Ascending aorta (tissue), 2 donors: ENCODE measurements at regions of chr9 and their contacts with region 1.

Region 1: GRCh38 chr9:115649991-115650472 is 503.6 kb upstream of the PAPPA start:
- DNase-seq: peak; percentile 86 to 97
- H3K4me3 ChIP-seq: no peak overlapping the region
- H3K27ac ChIP-seq: peak overlapping the region; percentile 93 to 94
- H3K4me1 ChIP-seq: peaks cover 0 to 22% of the 10 kb centered on the region in 2 donors
- H3K27me3 ChIP-seq: no peaks in the 10 kb centered on the region
- CTCF ChIP-seq: no peak

Region 2: DNA sequence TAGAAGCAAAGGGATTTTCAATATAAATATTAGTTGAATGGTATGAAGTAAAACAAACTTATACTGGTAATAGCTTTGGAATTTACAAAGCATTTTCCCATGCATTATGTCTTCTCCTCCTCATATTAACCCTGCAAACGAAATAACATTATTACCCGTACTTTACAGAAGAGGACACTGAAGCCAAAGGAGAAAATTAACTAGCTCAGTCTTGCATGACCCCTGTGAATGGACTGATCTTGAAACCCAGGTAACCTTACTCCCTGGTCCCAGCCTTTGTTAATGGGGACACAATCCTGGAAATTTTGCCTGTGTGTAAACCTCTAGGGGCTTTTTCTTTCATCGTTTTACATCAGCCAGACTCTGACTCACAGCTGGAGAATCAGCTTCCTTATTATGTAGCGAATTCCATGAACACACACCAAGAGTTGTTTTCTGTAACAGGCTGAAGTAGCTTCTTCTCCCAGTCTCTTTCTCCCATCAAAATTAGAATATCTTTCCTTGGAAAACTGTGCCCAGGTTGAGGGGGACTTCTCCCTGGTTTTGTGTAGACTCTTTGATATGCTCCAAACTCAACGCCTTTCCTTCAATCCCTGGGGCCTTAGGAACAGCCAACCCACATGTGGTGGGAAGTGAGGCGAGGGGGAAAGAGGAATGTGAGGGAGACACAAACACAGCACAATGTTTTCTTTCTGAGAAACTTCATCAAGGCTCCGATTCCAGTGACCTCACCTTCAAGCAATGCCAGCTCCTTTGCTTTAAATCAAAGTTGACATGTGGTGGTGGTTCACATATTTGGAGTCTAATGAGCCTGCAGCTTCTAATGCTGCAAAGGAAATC is 22.7 kb after region 1 on chr9:
- intact Hi-C with region 1: loop called (anchors 1 kb)
- DNase-seq: peak in 1 of 2 donors; percentile 77
- H3K4me3 ChIP-seq: no peak overlapping the region
- H3K27ac ChIP-seq: peak overlapping the region; percentile 81 to 86
- H3K4me1 ChIP-seq: peaks cover 9 to 36% of the 10 kb centered on the region in 2 donors
- H3K27me3 ChIP-seq: no peaks in the 10 kb centered on the region
- CTCF ChIP-seq: no peak

Region 3: DNA sequence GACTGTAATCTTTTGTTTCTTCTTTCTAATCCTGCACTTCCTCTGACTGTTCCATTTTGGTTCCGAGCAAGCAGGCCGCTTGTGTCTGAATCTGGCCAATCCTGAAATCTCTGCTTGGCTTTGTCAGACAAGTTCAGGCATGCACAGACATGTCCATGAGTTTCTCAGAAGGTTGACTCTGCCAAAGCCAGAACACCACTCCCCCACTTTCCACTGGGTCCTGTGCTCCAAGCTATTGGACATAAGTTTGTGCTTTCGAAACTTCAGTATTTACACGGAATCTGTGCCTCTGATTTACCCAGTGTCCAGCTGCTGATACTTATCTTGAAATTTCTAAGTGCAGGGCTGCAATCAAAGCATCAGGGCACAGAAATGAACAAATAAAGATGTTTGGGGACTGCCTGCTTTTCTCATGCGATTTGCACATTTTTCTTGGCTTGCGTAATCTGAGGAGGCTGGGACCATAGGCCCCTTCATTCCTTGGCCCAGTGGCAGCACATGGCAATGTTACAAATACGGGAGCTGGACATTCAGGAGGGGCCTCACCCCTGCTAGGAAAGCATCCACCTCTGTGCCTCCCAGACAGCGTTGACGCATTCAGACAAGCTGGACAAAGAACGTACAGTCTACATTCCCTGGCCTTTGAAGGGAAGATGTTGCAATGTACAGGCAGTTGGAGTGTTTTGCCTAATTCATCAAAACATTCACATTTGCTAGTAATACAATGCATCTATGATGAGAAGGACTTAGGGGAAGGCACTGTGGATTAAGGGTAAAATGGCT is 294.3 kb after region 1 on chr9:
- intact Hi-C with region 1: loop called (anchors 1 kb)
- DNase-seq: peak in 1 of 2 donors; percentile 95
- H3K4me3 ChIP-seq: peak overlapping the region in 1 of 2 donors; percentile 10
- H3K27ac ChIP-seq: peak overlapping the region; percentile 83 to 90
- H3K4me1 ChIP-seq: peaks cover 0 to 18% of the 10 kb centered on the region in 2 donors
- H3K27me3 ChIP-seq: no peaks in the 10 kb centered on the region
- CTCF ChIP-seq: no peak

Region 4: GRCh38 chr9:116156621-116157314 is 506.7 kb after region 1 on chr9:
- intact Hi-C with region 1: loop called (anchors 5 kb)
- DNase-seq: peak; percentile 62 to 90
- H3K4me3 ChIP-seq: peak overlapping the region in 1 of 2 donors; percentile 86
- H3K27ac ChIP-seq: peak overlapping the region; percentile 86 to 89
- H3K4me1 ChIP-seq: peaks cover 0 to 9% of the 10 kb centered on the region in 2 donors
- H3K27me3 ChIP-seq: no peaks in the 10 kb centered on the region
- CTCF ChIP-seq: no peak